ENCODE measurements at regions of chr3 and their contacts with region 1.

Region 1: DNA sequence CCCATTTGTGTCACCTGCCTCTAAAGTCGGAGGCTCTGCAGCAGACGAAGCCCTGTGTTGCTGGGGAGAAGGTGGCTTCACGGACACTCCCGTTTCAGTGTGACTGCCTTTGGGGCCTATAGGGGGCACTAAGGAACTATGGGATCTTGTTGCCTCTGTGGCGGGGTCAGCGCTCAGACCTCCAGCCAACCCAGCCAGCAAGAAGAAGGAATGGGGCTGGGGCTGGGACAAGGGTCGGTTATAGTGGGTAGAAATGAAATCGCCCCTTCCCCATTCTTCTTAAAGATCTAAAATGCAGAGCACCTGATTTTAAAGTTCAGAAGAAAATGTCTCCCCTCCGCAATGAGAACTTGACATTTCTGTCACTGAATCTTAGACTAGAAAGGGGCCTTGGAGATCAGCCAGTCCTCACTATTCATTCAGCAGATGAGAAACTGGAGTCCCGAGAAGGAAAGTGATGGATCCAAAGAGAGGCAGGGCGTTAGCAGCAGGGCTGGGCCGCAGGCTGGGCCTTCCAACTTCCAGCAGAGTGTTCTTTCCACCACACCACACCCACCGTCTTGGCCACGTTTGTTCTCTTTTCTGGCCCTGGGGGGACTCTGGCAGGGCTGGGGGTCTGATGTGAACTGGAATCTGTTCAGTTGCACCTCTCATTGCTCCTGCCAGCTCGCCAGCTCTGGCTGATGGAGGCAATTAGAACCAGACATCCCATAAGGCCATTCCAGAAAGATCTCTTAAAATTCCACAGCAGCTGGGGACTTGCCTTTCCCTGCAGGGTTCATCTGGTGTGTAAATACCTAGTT is 195.4 kb downstream of the OPA1 start:
- DNase-seq: peak; percentile 51 to 76
- ATAC-seq: peak; percentile 87 to 97 (median 95)
- H3K4me3 ChIP-seq: no peak overlapping the region
- H3K27ac ChIP-seq: peak overlapping the region in 4 of 10 donors; percentile 6 to 39 (median 16)
- H3K4me1 ChIP-seq: peaks cover 7 to 22% (median 12%) of the 10 kb centered on the region in 9 donors
- H3K27me3 ChIP-seq: peaks cover 3 to 61% (median 50%) of the 10 kb centered on the region in 7 donors
- CTCF ChIP-seq: peak; percentile 63 to 94 (median 84)

Region 2: DNA sequence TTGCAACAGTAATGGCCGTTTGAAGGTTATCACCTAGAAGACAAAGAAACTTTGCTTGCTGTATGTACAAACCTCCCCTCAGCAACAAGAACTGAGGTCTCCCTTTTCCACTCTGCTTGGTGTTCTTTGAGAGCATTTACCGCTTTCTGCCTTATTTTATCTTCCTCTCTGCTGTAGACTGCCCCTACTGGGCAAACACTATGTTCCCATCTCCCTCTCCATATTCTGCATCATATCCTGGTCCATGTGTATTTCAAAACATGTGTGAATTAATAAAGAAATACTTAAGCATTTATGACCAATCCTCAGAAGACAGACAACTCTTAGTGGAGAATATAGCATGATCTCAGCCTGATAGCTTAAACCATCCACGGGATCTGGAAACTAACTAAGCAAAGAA is 474.2 kb before region 1 on chr3:
- intact Hi-C with region 1: no loop called
- DNase-seq: no peak
- ATAC-seq: no peak
- H3K4me3 ChIP-seq: no peak overlapping the region
- H3K27ac ChIP-seq: no peak overlapping the region
- H3K4me1 ChIP-seq: peaks cover 0 to 16% (median 8%) of the 10 kb centered on the region in 9 donors
- H3K27me3 ChIP-seq: no peaks in the 10 kb centered on the region
- CTCF ChIP-seq: no peak

Region 3: GRCh38 chr3:193816590-193817311 is 28.4 kb after region 1 on chr3:
- intact Hi-C with region 1: no loop called
- DNase-seq: peak; percentile 82 to 89
- ATAC-seq: peak; percentile 90 to 96 (median 94)
- H3K4me3 ChIP-seq: peak overlapping the region in 2 of 10 donors; percentile 1 to 7
- H3K27ac ChIP-seq: peak overlapping the region in 9 of 10 donors; percentile 15 to 68 (median 52)
- H3K4me1 ChIP-seq: peaks cover 0 to 28% (median 13%) of the 10 kb centered on the region in 9 donors
- H3K27me3 ChIP-seq: peaks cover 0 to 16% (median 0%) of the 10 kb centered on the region in 7 donors
- CTCF ChIP-seq: no peak

Region 4: GRCh38 chr3:193982258-193982659 is 193.9 kb after region 1 on chr3:
- intact Hi-C with region 1: loop called in 1 of 10 experiments (anchors 5 kb)
- DNase-seq: peak; percentile 82 to 83
- ATAC-seq: peak; percentile 65 to 95 (median 82)
- H3K4me3 ChIP-seq: no peak overlapping the region
- H3K27ac ChIP-seq: peak overlapping the region in 6 of 10 donors; percentile 4 to 39 (median 20)
- H3K4me1 ChIP-seq: peaks cover 9 to 59% (median 44%) of the 10 kb centered on the region in 9 donors
- H3K27me3 ChIP-seq: peaks cover 0 to 21% (median 0%) of the 10 kb centered on the region in 7 donors
- CTCF ChIP-seq: no peak

Region 5: DNA sequence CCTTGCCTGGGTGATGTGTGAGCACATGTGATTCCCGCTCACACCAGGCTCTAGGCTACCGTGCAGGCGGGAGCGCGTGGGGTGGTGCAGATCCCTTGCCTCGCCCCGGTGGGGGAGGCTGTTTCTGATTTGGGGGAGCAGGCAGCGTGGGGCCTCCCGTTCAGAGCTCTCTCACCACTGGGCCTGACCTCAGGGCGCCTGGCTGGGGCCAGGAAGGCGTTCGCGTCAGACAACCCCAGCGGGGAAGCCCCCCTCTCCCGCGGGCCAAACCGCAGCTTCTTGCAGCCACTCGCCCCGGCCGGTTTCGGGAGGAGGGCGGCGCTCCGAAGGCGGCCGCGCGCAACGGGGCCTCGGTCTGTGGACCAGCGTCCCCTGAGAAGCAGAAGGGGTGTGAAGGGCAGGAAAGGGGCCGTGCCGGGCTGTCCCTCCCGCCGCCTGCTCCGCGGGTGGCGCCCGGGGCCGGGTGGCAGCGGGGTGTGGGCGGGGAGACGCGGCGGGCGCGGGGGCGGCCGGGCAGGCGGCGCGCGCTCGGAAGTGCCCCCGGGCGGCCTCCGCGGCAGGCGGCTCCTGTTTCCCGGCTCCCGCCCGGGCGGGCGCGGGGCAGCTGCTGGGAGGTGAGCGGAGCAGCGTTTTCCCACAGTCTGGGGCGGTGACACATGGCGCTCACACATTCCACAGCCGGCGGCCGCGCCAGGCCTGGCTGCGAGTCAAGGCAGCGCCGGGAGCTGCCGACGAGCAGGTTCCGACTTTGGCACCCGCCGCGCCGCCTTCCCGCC is 282.4 kb after region 1 on chr3:
- intact Hi-C with region 1: loop called in 1 of 10 experiments (anchors 10 kb)
- DNase-seq: peak; percentile 84 to 89
- ATAC-seq: peak; percentile 87 to 93 (median 92)
- H3K4me3 ChIP-seq: peak overlapping the region; percentile 25 to 64 (median 53)
- H3K27ac ChIP-seq: peak overlapping the region; percentile 59 to 96 (median 91)
- H3K4me1 ChIP-seq: peaks cover 0 to 32% (median 18%) of the 10 kb centered on the region in 9 donors
- H3K27me3 ChIP-seq: peaks cover 0 to 38% (median 11%) of the 10 kb centered on the region in 7 donors
- CTCF ChIP-seq: peak in 1 of 9 donors; percentile 10

Measured in heart right ventricle (tissue), 16 donors.